ENCODE measurements at regions of chr10 and their contacts with region 1.

Region 1: GRCh38 chr10:27223964-27224363 is 16.6 kb downstream of the ACBD5 start:
- DNase-seq: no peak
- ATAC-seq: peak; percentile 34
- H3K4me3 Mint-ChIP-seq: no peak overlapping the region
- H3K27ac Mint-ChIP-seq: no peak overlapping the region
- H3K4me1 Mint-ChIP-seq: peaks cover 23% of the 10 kb centered on the region
- H3K27me3 Mint-ChIP-seq: no peaks in the 10 kb centered on the region

Region 2: DNA sequence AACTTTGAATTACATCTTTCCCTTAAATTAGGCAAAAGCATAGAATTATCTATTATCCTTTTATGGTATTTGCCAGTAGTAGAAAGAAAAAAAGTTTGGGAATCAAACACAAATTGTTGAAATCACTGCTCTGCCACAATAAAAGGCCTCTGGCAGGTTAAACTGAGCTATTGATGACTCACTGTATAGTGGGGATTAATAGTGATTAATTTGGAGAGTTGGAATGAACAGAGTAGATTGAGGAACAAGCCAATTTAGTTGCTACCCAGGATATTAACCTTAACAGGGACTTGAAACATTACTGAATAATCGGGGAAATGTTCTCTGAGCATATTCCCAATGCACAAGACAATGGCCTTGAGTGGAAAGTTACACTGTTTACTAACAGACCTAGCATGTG is 35.7 kb before region 1 on chr10:
- CTCF ChIA-PET with region 1: interaction called, 12 read pairs
- DNase-seq: no peak
- ATAC-seq: no peak
- H3K4me3 Mint-ChIP-seq: no peak overlapping the region
- H3K27ac Mint-ChIP-seq: no peak overlapping the region
- H3K4me1 Mint-ChIP-seq: no peaks in the 10 kb centered on the region
- H3K27me3 Mint-ChIP-seq: no peaks in the 10 kb centered on the region

Region 3: DNA sequence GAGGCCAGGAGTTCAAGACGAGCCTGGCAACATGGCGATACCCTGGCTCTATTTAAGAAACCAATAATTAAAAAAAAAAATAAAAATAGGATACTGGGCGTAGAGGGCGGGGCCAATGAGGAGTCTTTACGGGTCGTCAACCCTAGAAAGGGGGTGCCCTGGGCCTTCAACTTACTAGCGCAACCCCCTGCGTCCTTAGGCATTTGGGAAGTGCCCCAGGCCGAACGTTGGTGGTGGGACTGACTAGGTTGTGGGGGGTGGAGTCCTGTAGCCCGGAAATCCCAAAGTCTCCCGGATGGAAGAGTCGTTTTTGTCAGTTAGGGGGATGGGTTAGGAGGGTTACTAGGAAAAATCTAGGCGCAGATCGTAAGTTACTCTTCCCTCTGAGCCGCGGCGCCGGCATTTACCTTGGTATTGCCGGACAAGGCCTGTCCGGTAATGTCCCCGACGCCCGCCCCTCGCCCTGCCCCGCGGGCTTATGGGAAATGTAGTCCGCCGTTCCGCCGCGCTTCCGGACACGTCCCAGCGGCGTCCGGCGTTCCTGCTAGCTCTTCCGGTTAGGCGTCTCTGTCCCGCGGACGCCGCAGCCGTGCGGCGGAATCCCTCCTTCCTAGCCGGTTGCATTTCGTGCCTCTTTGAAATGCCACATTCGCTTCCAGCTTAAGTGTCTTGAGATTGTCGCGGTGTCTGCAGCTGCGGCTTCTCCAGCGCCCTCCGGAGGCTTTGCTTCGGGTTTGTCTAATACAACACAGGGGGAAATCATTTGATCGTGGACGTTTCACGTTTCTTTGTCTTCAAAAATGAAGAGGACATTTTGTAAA is 17.9 kb after region 1 on chr10:
- CTCF ChIA-PET with region 1: interaction called, 40 read pairs
- DNase-seq: peak; percentile 93
- ATAC-seq: peak; percentile 65
- H3K4me3 Mint-ChIP-seq: peak overlapping the region; percentile 97
- H3K27ac Mint-ChIP-seq: peak overlapping the region; percentile 97
- H3K4me1 Mint-ChIP-seq: peaks cover 24% of the 10 kb centered on the region
- H3K27me3 Mint-ChIP-seq: no peaks in the 10 kb centered on the region

Region 4: GRCh38 chr10:27252267-27253000 is 28.5 kb after region 1 on chr10:
- CTCF ChIA-PET with region 1: interaction called, 12 read pairs
- DNase-seq: peak; percentile 86
- ATAC-seq: peak; percentile 98
- H3K4me3 Mint-ChIP-seq: peak overlapping the region; percentile 76
- H3K27ac Mint-ChIP-seq: peak overlapping the region; percentile 87
- H3K4me1 Mint-ChIP-seq: peaks cover 16% of the 10 kb centered on the region
- H3K27me3 Mint-ChIP-seq: peaks cover 5% of the 10 kb centered on the region